ENCODE measurements at regions of chr4 and their contacts with region 1.

Region 1: GRCh38 chr4:88211473-88212252 is 53.2 kb upstream of the ABCG2 start:
- DNase-seq: no peak
- H3K4me3 ChIP-seq: no peak overlapping the region
- H3K27ac ChIP-seq: no peak overlapping the region
- H3K4me1 ChIP-seq: no peaks in the 10 kb centered on the region
- H3K27me3 ChIP-seq: no peaks in the 10 kb centered on the region
- CTCF ChIP-seq: peak; percentile 34 to 69 (median 60)
- EP300 ChIP-seq: no peak
- POLR2A ChIP-seq: no peak

Region 2: DNA sequence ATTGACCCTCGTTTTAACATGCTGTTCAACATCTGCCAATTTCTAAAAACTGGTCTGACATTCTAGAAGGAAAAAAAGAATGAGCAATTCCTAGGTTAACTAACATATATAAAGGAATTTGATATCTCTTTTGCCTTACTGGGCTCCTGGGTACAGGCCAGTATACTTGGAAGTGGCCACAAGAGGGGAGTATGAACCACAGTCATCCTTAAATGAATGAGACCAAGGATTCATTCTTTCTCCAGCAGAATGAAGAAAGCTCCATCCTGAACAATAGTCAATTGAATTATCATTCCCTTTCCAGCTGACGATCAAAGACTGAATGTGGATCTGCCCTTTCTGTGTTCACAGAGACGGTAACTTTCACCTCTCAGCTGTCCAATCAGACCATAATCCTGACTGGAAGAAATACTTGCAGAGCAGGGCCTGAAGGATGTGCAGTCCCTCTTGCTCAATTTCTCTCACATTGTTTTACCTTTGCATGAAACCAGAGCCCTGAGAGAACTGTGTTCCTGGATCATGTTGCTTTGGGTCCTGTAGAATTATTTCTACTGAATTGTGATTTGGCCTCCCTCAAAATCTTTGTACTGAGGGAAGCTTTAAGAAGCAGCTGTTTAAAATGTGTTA is 667.7 kb before region 1 on chr4:
- intact Hi-C with region 1: loop called (anchors 5 kb)
- DNase-seq: no peak
- H3K4me3 ChIP-seq: no peak overlapping the region
- H3K27ac ChIP-seq: peak overlapping the region in 2 of 4 donors; percentile 22 to 92
- H3K4me1 ChIP-seq: peaks cover 0 to 28% (median 24%) of the 10 kb centered on the region in 4 donors
- H3K27me3 ChIP-seq: no peaks in the 10 kb centered on the region
- CTCF ChIP-seq: peak; percentile 33 to 66 (median 48)
- EP300 ChIP-seq: no peak
- POLR2A ChIP-seq: no peak

Region 3: GRCh38 chr4:87848622-87849351 is 362.9 kb before region 1 on chr4:
- intact Hi-C with region 1: loop called (anchors 1 kb)
- DNase-seq: peak; percentile 73
- H3K4me3 ChIP-seq: peak overlapping the region in 3 of 4 donors; percentile 1 to 35 (median 29)
- H3K27ac ChIP-seq: peak overlapping the region in 3 of 4 donors; percentile 24 to 33 (median 30)
- H3K4me1 ChIP-seq: peaks cover 0 to 15% (median 5%) of the 10 kb centered on the region in 4 donors
- H3K27me3 ChIP-seq: no peaks in the 10 kb centered on the region
- CTCF ChIP-seq: peak; percentile 29 to 63 (median 45)
- EP300 ChIP-seq: no peak
- POLR2A ChIP-seq: no peak

Region 4: GRCh38 chr4:87973283-87974169 is 238.1 kb before region 1 on chr4:
- intact Hi-C with region 1: loop called (anchors 10 kb)
- DNase-seq: no peak
- H3K4me3 ChIP-seq: peak overlapping the region in 1 of 4 donors; percentile 4
- H3K27ac ChIP-seq: peak overlapping the region in 2 of 4 donors; percentile 11
- H3K4me1 ChIP-seq: peaks cover 0 to 5% (median 2%) of the 10 kb centered on the region in 4 donors
- H3K27me3 ChIP-seq: no peaks in the 10 kb centered on the region
- CTCF ChIP-seq: peak; percentile 29 to 78 (median 71)
- EP300 ChIP-seq: no peak
- POLR2A ChIP-seq: no peak

Region 5: GRCh38 chr4:88033309-88033708 is 178.4 kb before region 1 on chr4:
- intact Hi-C with region 1: loop called (anchors 5 kb)
- DNase-seq: no peak
- H3K4me3 ChIP-seq: no peak overlapping the region
- H3K27ac ChIP-seq: no peak overlapping the region
- H3K4me1 ChIP-seq: peaks cover 0 to 6% (median 3%) of the 10 kb centered on the region in 4 donors
- H3K27me3 ChIP-seq: no peaks in the 10 kb centered on the region
- CTCF ChIP-seq: peak; percentile 22 to 64 (median 42)
- EP300 ChIP-seq: no peak
- POLR2A ChIP-seq: no peak

Region 6: DNA sequence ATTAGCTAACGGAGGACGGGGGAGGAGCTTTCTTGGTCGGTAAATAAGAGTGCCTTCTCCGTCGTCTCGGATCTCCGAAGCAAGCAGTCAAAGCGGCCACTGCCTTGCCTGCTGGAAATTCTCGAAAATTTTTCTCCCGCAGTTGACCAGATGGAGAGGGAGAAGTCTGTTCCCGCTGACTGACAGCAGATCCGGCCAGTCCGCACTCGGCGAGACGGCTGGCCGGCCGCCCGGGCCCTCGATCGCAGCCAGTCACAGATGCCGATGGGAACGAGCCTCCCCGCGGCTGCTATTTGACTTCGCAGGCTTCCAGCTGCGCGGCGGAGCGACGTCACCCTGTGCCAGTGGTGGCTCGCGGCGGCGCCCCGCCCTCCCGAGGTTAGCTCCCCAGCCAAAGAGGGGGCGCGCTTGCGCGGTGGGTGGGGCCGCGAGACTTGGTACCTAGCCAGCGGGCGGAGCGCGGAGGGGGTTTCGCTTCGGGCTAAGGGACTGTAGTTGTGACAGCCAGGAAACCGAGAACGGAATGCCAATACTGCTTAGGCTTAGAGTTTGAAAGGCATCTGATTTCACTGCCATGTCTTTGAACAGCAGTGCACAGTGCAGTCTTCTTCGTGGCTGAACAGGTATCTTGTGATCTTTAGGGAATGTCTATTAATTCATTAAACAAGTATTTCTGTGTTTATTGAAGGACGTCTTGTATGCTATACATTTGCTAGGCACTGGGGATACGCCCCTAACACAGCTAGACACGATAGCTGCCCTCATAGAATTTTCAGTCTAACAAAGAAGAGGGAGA is 73.0 kb after region 1 on chr4 and contains the start of gene PPM1K:
- intact Hi-C with region 1: loop called (anchors 5 kb)
- DNase-seq: peak; percentile 100
- H3K4me3 ChIP-seq: peak within 1 kb of the TSS; percentile 64 to 74 (median 70)
- H3K27ac ChIP-seq: peak within 1 kb of the TSS; percentile 93 to 99 (median 96)
- H3K4me1 ChIP-seq: peaks cover 0 to 28% (median 12%) of the 10 kb centered on the region in 4 donors
- H3K27me3 ChIP-seq: no peaks in the 10 kb centered on the region
- CTCF ChIP-seq: no peak
- EP300 ChIP-seq: peak in 2 of 4 donors; percentile 26 to 64
- POLR2A ChIP-seq: peak; percentile 82 to 87
- total RNA-seq, gene PPM1K: 12.6 to 16.8 (median 15.4) TPM

Region 7: GRCh38 chr4:88378691-88379559 is 167.3 kb after region 1 on chr4 and contains the start of gene HERC6:
- intact Hi-C with region 1: loop called (anchors 5 kb)
- DNase-seq: peak; percentile 89
- H3K4me3 ChIP-seq: peak within 1 kb of the TSS; percentile 88 to 100 (median 98)
- H3K27ac ChIP-seq: peak within 1 kb of the TSS; percentile 89 to 95 (median 92)
- H3K4me1 ChIP-seq: no peaks in the 10 kb centered on the region
- H3K27me3 ChIP-seq: no peaks in the 10 kb centered on the region
- CTCF ChIP-seq: peak; percentile 60 to 87 (median 70)
- EP300 ChIP-seq: no peak
- POLR2A ChIP-seq: no peak
- total RNA-seq, gene HERC6: 5.7 to 8.6 (median 7.4) TPM

Measured in sigmoid colon (tissue), 7 donors.